ENCODE measurements at regions of chr19 and their contacts with region 1.

Region 1: DNA sequence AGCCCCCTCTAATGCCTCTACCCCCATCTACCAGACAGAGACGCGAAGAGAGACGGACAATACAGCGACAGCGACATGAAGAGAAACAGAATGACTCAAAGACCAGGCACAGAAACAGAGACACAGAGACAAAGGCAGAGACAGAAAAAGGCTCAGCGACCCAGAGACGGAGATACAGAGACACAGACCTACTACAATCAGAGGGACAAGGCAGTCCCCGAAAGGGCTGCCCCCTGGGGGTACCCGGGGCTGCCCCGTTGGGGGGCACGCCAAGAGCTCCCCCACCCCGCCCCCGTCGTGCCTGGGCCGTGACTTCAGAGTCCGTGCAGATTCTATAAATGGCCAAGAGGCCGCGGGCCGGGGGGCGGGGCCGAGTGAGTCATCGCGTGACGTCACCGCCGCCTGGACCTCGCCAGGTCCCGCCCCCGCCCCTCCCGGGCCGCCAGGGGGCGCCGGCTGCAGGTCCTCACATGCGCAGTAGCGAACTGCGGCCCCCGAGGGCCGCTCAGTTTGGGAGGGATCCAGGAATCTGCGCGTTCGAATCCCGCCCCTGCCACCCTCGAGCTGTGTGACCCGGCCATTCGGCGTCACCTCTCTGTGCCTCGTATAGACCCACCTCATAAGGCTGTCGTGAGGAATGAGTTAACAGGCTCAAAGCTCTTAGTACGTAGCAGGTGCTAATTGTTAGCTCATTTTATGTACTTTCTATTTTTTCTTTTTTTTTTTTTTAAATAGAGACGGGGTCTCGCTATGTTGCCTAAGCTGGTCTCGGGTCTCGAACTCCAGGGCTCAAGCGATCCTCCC is 2.7 kb upstream of the CNN1 start:
- DNase-seq: peak; percentile 90 to 94
- ATAC-seq: peak; percentile 91 to 95 (median 94)
- H3K4me3 ChIP-seq: peak overlapping the region; percentile 5
- H3K4me3 Mint-ChIP-seq: peak overlapping the region; percentile 67
- H3K27ac ChIP-seq: peak overlapping the region; percentile 60
- H3K27ac Mint-ChIP-seq: peak overlapping the region; percentile 75 to 88
- H3K4me1 ChIP-seq: peaks cover 12% of the 10 kb centered on the region
- H3K4me1 Mint-ChIP-seq: peaks cover 8 to 16% of the 10 kb centered on the region in 2 donors
- H3K27me3 ChIP-seq: peaks cover 5% of the 10 kb centered on the region
- H3K27me3 Mint-ChIP-seq: peaks cover 12 to 16% of the 10 kb centered on the region in 2 donors
- CTCF ChIP-seq: peak; percentile 93

Region 2: DNA sequence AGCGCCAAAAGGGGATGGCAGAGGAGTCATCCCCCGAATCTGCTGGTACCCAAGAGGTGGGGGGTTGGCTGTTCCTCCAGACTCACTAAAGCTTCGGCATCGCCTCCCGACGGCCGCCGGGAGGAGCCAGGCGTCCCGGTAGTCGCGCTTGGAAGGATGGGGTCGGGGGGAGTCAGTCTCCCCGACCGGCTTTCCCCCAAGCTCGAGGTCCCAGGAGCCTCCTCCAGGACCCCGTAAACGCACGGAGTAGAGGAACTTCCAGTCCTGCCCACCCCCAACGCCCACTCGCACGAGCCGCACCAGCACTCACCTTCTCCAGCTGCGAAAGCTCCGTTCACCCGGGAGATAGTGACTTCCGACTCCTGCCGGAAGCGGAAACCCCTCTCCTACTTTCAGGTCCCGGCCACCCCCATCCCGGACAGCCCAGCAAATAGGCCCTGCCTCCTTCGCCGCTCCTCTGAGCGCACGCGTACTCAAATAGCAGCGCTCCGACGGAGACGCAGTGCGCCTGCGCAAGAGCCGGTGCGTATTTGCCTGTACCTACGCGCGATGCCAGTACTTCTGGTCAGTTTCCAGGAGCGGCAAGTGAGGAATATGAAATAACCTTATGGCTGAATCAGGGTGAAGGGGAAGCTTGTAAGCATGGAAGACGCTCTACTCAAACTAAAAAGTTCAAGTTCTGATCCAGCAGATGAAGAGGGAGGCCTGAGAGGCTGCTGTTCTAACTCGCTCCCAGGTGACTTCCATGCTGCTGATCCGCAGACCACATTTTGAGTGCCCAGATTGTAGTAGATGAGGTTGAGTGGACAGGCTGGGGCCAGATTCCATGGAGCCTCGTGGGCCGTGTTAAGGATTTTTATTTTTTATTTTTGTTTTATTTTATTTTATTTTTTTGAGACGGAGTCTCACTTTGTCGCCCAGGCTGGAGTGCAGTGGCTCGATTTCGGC is 23.2 kb after region 1 on chr19 and contains the start of gene ELOF1:
- intact Hi-C with region 1: loop called (anchors 1 kb)
- DNase-seq: peak; percentile 90 to 99
- ATAC-seq: peak; percentile 94 to 96 (median 95)
- H3K4me3 ChIP-seq: peak within 1 kb of the TSS; percentile 73
- H3K4me3 Mint-ChIP-seq: peak within 1 kb of the TSS; percentile 98
- H3K27ac ChIP-seq: peak within 1 kb of the TSS; percentile 82
- H3K27ac Mint-ChIP-seq: peak within 1 kb of the TSS; percentile 92 to 96
- H3K4me1 ChIP-seq: peaks cover 28% of the 10 kb centered on the region
- H3K4me1 Mint-ChIP-seq: peaks cover 28 to 43% of the 10 kb centered on the region in 2 donors
- H3K27me3 ChIP-seq: no peaks in the 10 kb centered on the region
- H3K27me3 Mint-ChIP-seq: no peaks in the 10 kb centered on the region
- CTCF ChIP-seq: no peak
- total RNA-seq, gene ELOF1: 46.4 to 54.2 (median 50.0) TPM

Region 3: DNA sequence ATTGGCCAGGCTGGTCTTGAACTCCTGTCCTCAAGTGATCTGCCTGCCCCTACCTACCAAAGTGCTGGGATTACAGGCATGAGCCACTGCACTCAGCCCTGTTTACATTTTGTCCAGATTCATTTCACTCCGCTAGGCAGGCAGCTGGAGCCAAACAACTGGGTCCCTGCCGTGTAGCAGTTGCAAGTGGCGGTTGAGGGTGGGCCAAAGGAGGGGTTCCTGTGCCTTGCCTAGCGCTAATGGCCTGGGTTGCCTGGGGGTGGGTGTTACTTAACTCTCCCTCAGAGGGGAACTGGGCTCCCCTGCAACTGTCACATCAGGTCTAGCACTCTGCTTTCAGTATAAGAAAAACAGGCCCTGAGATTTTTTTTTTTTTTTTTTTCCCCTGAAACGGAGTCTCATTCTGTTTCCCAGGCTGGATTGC is 34.1 kb after region 1 on chr19:
- intact Hi-C with region 1: no loop called
- DNase-seq: no peak
- ATAC-seq: no peak
- H3K4me3 ChIP-seq: no peak overlapping the region
- H3K4me3 Mint-ChIP-seq: no peak overlapping the region
- H3K27ac ChIP-seq: no peak overlapping the region
- H3K27ac Mint-ChIP-seq: no peak overlapping the region
- H3K4me1 ChIP-seq: peaks cover 27% of the 10 kb centered on the region
- H3K4me1 Mint-ChIP-seq: peaks cover 7 to 9% of the 10 kb centered on the region in 2 donors
- H3K27me3 ChIP-seq: no peaks in the 10 kb centered on the region
- H3K27me3 Mint-ChIP-seq: no peaks in the 10 kb centered on the region
- CTCF ChIP-seq: no peak

Measured in natural killer cell (primary cell).